WTC11 (cell line): ENCODE measurements at regions of chr10 and their contacts with region 1.

Region 1: GRCh38 chr10:63866075-63866746 is 345.0 kb downstream of the REEP3 start:
- DNase-seq: peak; percentile 87
- ATAC-seq: peak; percentile 96
- H3K4me3 Mint-ChIP-seq: peak overlapping the region; percentile 73
- H3K27ac Mint-ChIP-seq: no peak overlapping the region
- H3K4me1 Mint-ChIP-seq: peaks cover 16% of the 10 kb centered on the region
- H3K27me3 Mint-ChIP-seq: no peaks in the 10 kb centered on the region; the same call in 1 of the 2 replicates
- CTCF ChIP-seq: peak; percentile 67

Region 2: GRCh38 chr10:63819753-63820329 is 46.4 kb before region 1 on chr10:
- CTCF ChIA-PET with region 1: interaction called, 18 read pairs
- POLR2A ChIA-PET with region 1: no interaction called
- DNase-seq: peak; percentile 74
- ATAC-seq: peak; percentile 46
- H3K4me3 Mint-ChIP-seq: no peak overlapping the region
- H3K27ac Mint-ChIP-seq: no peak overlapping the region
- H3K4me1 Mint-ChIP-seq: no peaks in the 10 kb centered on the region
- H3K27me3 Mint-ChIP-seq: no peaks in the 10 kb centered on the region
- CTCF ChIP-seq: peak; percentile 69

Region 3: DNA sequence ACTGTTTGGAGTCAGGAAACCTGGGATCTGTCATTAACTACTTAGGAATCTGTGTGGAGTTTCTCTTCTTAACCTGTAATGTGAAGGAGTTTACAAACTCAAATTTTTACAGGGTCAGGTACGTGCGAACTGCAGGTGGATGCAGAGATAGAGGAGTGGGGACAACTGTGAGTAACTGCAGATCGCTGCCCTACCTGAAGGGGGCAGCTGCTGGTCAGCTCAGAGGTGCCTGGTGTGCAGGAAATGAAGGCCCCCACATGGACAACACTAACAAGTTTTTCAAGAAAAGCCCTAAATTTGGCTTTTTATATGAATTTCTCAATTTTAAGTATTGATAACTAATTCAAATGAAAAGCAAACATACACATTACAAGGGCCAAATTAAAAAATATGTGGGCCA is 35.0 kb after region 1 on chr10:
- CTCF ChIA-PET with region 1: interaction called, 30 read pairs
- POLR2A ChIA-PET with region 1: no interaction called
- DNase-seq: peak; percentile 55
- ATAC-seq: peak; percentile 99
- H3K4me3 Mint-ChIP-seq: no peak overlapping the region
- H3K27ac Mint-ChIP-seq: no peak overlapping the region
- H3K4me1 Mint-ChIP-seq: peaks cover 3% of the 10 kb centered on the region; the same call in 1 of the 2 replicates
- H3K27me3 Mint-ChIP-seq: no peaks in the 10 kb centered on the region
- CTCF ChIP-seq: peak; percentile 79

Region 4: DNA sequence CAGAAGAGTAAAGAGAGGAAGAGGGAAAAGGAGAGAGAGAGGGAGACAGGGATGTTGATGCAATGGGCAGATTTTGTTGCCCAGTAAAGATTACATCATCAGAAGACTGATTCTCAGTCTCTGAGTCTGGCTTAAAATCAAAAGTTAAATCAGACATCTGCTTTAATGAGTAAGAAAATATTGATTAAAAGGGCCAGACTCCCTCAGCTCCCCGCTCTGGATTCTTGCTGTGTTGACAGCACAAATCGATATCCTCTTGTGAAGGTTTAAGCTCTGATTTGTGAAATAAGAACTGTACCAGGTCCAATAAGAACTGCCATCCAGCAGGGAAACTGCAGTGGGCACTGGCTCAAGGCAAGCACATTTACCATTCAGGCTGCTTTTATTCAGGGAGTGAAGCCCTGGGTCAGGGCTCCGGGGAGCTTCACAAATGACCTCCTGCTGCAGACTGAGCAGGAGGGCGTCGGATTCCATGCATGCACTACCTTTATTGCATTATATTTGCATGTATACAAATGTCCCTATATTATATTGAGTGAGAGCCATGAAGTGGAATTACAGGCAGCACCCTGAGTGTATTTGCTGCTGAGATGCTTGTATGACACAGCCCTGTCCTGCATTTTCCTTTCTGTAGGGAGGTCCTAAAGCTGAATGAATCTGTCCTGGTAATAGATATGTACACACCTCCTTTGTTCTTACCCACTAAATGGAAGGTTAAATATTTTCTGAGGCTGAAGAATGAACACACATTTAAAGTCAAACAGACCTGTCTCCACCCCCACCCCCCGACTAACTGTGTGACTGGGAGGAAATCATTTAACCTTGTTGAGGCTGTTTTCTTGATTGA is 56.5 kb after region 1 on chr10:
- CTCF ChIA-PET with region 1: interaction called, 10 read pairs
- POLR2A ChIA-PET with region 1: no interaction called
- DNase-seq: no peak
- ATAC-seq: peak; percentile 69
- H3K4me3 Mint-ChIP-seq: no peak overlapping the region
- H3K27ac Mint-ChIP-seq: peak overlapping the region; percentile 6; the same call in 1 of the 2 replicates
- H3K4me1 Mint-ChIP-seq: peaks cover 36% of the 10 kb centered on the region
- H3K27me3 Mint-ChIP-seq: peaks cover 6% of the 10 kb centered on the region
- CTCF ChIP-seq: no peak

Region 5: GRCh38 chr10:64041185-64041988 is 175.2 kb after region 1 on chr10:
- CTCF ChIA-PET with region 1: interaction called, 17 read pairs
- POLR2A ChIA-PET with region 1: no interaction called
- DNase-seq: peak; percentile 85
- ATAC-seq: peak; percentile 91
- H3K4me3 Mint-ChIP-seq: peak overlapping the region; percentile 25; the same call in 1 of the 2 replicates
- H3K27ac Mint-ChIP-seq: no peak overlapping the region
- H3K4me1 Mint-ChIP-seq: peaks cover 6% of the 10 kb centered on the region
- H3K27me3 Mint-ChIP-seq: no peaks in the 10 kb centered on the region
- CTCF ChIP-seq: peak; percentile 99